PC-9 (cell line): ENCODE measurements at regions of chr13 and their contacts with region 1.

Region 1: GRCh38 chr13:50645092-50645491 is 198.4 kb downstream of the DLEU7 start:
- DNase-seq: peak in 1 of 2 experiments; percentile 82
- H3K4me3 ChIP-seq: peak overlapping the region; percentile 15; the same call in 1 of the 2 replicates
- H3K27ac ChIP-seq: peak overlapping the region; percentile 90
- H3K4me1 ChIP-seq: peaks cover 34% of the 10 kb centered on the region
- H3K27me3 ChIP-seq: no peaks in the 10 kb centered on the region
- CTCF ChIP-seq: no peak

Region 2: GRCh38 chr13:50594276-50595051 is 50.6 kb before region 1 on chr13:
- CTCF ChIA-PET with region 1: no interaction called
- POLR2A ChIA-PET with region 1: no interaction called
- intact Hi-C with region 1: no loop called
- DNase-seq: no peak
- H3K4me3 ChIP-seq: no peak overlapping the region
- H3K27ac ChIP-seq: no peak overlapping the region
- H3K4me1 ChIP-seq: peaks cover 16% of the 10 kb centered on the region
- H3K27me3 ChIP-seq: no peaks in the 10 kb centered on the region
- CTCF ChIP-seq: no peak

Region 3: GRCh38 chr13:50713523-50714248 is 68.6 kb after region 1 on chr13:
- CTCF ChIA-PET with region 1: no interaction called
- POLR2A ChIA-PET with region 1: no interaction called
- intact Hi-C with region 1: loop called (anchors 10 kb)
- DNase-seq: no peak
- H3K4me3 ChIP-seq: no peak overlapping the region
- H3K27ac ChIP-seq: no peak overlapping the region
- H3K4me1 ChIP-seq: no peaks in the 10 kb centered on the region
- H3K27me3 ChIP-seq: no peaks in the 10 kb centered on the region
- CTCF ChIP-seq: no peak